ENCODE measurements at regions of chr19 and their contacts with region 1.

Region 1: DNA sequence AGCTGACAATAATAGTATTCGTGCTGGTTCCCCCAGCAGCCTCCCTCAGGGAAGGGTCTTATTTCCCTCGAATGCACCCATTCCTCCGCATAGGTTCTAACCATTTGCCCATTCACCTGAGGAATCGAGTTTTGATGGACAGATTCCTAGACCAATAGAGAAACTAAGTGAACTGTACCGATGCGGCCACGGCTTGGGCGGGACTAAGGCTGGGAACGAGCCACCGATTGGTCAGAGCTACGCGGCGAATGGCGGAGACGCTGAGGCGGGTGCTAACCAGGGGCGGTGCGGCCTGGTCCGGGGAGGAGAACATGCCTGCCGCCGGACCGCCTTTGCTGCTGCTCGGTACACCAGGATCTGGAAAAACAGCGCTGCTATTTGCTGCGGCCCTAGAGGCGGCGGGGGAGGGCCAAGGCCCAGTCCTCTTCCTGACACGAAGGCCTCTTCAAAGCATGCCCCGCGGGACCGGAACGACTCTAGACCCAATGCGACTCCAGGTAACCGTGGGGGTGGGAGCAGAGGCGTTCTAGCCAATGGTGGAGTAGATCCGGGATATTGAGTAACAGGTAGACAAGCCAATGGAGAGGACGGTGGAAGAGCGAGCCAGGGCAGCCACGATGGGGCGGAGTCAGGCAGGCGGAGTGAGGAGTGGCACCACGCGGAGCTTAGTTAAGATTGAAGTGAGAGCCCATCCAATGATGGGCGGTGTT is at the start of gene SWSAP1:
- DNase-seq: peak; percentile 98 to 99
- ATAC-seq: peak; percentile 94 to 95
- H3K4me3 ChIP-seq: peak within 1 kb of the TSS; percentile 47
- H3K27ac ChIP-seq: peak within 1 kb of the TSS; percentile 92 to 93
- H3K4me1 ChIP-seq: peaks cover 46% of the 10 kb centered on the region
- CTCF ChIP-seq: no peak
- EP300 ChIP-seq: no peak
- POLR2A ChIP-seq: peak; percentile 60
- RAD21 ChIP-seq: no peak
- polyA plus RNA-seq, gene SWSAP1: 1.2 and 1.3 TPM in 2 replicates

Region 2: GRCh38 chr19:11339254-11340098 is 35.1 kb before region 1 on chr19 and contains the start of gene RAB3D:
- CTCF ChIA-PET with region 1: no interaction called
- POLR2A ChIA-PET with region 1: interaction called, 15 read pairs
- DNase-seq: peak; percentile 85
- ATAC-seq: peak; percentile 87 to 95
- H3K4me3 ChIP-seq: peak within 1 kb of the TSS; percentile 89
- H3K27ac ChIP-seq: peak within 1 kb of the TSS; percentile 91 to 95
- H3K4me1 ChIP-seq: peaks cover 25% of the 10 kb centered on the region
- CTCF ChIP-seq: no peak
- EP300 ChIP-seq: no peak
- POLR2A ChIP-seq: peak; percentile 43; the same call in 1 of the 2 replicates
- RAD21 ChIP-seq: no peak
- polyA plus RNA-seq, gene RAB3D: 22.3 and 26.8 TPM in 2 replicates

Region 3: DNA sequence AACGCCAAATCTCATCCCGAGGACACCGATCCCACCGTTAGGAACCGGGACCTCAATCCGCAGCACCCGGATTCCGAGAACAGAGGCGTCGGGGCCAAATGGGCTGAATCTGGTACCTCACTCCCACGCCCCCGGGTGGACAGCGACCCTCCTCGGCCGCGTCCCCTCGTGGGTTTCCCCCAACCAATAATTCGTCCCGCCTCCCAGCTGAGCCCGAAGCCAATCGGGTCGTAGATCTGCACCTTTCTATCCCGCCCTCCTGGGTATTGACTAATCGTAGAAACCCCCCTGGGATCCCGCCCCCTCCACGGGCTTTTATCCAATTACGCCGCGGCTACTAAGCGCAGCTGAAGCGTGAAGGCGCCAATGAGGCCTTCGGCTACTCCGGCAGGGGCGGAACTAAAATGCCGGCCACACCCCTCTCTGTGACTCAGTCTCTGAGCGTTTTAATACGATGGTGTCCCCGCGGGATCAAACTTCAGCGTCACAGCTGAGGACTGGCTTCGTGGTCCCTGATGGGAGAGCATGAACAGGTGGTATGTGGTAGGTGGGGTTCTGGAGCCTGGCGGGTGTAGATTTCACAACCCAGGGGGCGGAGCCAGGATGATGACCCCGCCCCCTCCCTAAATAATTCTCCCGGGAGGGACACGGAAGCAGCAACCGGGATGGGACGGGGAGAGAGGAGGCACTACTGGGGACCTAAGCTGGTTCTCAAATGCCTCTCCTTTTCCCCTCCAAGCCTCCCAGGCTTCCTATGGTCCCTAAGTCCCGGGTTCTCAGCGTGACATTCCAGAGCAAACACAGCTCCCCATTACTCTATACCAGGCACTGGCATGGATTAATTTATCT is 28.3 kb before region 1 on chr19 and contains the starts of genes CCDC159 and TMEM205:
- CTCF ChIA-PET with region 1: interaction called, 5 read pairs
- POLR2A ChIA-PET with region 1: interaction called, 19 read pairs
- DNase-seq: peak; percentile 89 to 97
- ATAC-seq: peak; percentile 82 to 91
- H3K4me3 ChIP-seq: peak within 1 kb of the TSS; percentile 90
- H3K27ac ChIP-seq: peak within 1 kb of the TSS; percentile 79 to 98
- H3K4me1 ChIP-seq: peaks cover 28% of the 10 kb centered on the region
- CTCF ChIP-seq: no peak
- EP300 ChIP-seq: no peak
- POLR2A ChIP-seq: peak; percentile 72
- RAD21 ChIP-seq: no peak
- polyA plus RNA-seq, gene CCDC159: 11.3 and 12.2 TPM in 2 replicates
- polyA plus RNA-seq, gene TMEM205: 183 and 230 TPM in 2 replicates

Region 4: DNA sequence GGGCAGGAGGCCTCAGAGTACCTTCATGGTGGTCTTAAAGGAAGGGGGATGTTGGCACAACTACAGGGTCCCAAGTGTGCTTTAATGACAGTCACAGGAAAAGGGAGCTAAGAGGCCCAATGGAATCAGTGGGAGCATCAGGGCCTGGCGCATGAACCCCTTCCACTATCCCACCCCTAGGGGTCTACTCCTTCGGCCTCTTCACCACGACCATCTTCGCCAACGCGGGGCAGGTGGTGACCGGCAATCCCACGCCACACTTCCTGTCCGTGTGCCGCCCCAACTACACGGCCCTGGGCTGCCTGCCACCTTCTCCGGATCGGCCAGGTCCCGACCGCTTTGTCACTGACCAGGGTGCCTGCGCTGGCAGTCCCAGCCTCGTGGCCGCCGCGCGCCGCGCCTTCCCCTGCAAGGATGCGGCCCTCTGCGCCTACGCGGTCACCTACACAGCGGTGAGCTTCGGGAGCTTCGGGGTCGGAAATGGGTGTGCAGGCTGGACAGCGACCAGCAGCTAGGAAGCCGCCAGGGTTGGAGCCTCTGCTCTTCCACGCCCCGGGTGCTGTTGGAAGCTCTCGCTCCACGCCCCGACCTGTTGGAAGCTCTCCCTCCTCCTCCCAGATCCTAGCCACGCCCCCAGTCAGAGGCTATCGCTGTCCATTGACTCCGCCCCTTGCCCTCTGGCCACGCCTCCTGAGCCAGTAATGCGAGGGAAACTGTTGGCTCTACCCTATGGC is 13.4 kb before region 1 on chr19:
- CTCF ChIA-PET with region 1: interaction called, 4 read pairs
- POLR2A ChIA-PET with region 1: interaction called, 13 read pairs
- DNase-seq: no peak
- ATAC-seq: peak; percentile 33 to 66; a peak in 3 of 6 replicates
- H3K4me3 ChIP-seq: no peak overlapping the region
- H3K27ac ChIP-seq: no peak overlapping the region
- H3K4me1 ChIP-seq: no peaks in the 10 kb centered on the region
- CTCF ChIP-seq: no peak
- EP300 ChIP-seq: no peak
- POLR2A ChIP-seq: no peak
- RAD21 ChIP-seq: no peak

Region 5: DNA sequence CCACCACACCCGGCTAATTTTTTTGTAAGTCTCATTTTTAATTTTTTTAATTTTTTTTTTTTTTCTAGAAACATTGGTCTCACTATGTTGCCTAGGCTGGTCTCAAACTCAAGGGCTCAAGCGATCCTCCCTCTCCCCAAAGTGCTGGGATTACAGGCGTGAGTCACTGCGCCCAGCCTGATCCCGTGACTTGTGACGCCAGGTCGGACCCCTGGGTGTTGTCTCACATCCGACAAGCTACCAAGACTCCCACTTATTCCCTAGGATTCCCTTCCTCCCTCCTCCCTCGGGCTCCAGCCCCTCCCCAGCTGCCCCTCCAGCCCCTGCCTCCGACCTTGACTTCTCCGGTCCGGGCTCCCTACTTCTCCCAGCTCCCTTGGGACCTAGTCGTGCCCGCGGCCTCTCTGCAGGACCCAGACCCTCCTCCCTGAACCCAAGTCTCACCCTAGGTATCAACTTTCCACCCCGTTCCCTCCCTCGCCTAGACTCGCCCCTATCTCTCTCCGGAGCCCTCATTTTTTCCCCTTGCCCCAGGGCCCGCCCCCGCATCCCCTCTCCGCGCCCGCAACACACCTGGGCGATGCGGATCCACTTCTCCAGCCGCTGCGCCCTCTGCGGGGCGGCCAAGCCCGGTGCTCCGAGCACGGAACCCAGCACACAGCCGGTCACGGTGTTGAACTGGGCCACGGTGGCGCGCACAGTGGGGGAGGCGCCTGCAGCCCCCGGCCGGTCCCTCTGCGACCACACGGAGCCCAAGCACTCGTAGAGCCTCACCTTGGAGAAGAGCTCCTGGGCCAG is 31.5 kb after region 1 on chr19:
- CTCF ChIA-PET with region 1: no interaction called
- POLR2A ChIA-PET with region 1: no interaction called
- DNase-seq: no peak
- ATAC-seq: no peak
- H3K4me3 ChIP-seq: no peak overlapping the region
- H3K27ac ChIP-seq: no peak overlapping the region
- H3K4me1 ChIP-seq: no peaks in the 10 kb centered on the region
- CTCF ChIP-seq: no peak
- EP300 ChIP-seq: no peak
- POLR2A ChIP-seq: no peak
- RAD21 ChIP-seq: no peak

Region 6: GRCh38 chr19:11422163-11423021 is 47.8 kb after region 1 on chr19:
- CTCF ChIA-PET with region 1: no interaction called
- POLR2A ChIA-PET with region 1: interaction called, 11 read pairs
- DNase-seq: peak; percentile 48 to 60
- ATAC-seq: peak; percentile 51 to 71; a peak in 5 of 6 replicates
- H3K4me3 ChIP-seq: peak overlapping the region; percentile 31; the same call in 2 of the 3 replicates
- H3K27ac ChIP-seq: no peak overlapping the region
- H3K4me1 ChIP-seq: no peaks in the 10 kb centered on the region
- CTCF ChIP-seq: no peak
- EP300 ChIP-seq: no peak
- POLR2A ChIP-seq: no peak
- RAD21 ChIP-seq: no peak

Measured in A549 (cell line).